ENCODE measurements at regions of chr1 and their contacts with region 1.

Region 1: GRCh38 chr1:170657275-170657853 is 6.6 kb upstream of the PRRX1 start:
- DNase-seq: peak; percentile 42
- ATAC-seq: peak; percentile 78
- H3K4me3 ChIP-seq: no peak overlapping the region
- H3K27ac ChIP-seq: no peak overlapping the region
- H3K4me1 ChIP-seq: no peaks in the 10 kb centered on the region
- H3K27me3 ChIP-seq: peaks cover 2 to 16% of the 10 kb centered on the region in 2 experiments
- CTCF ChIP-seq: no peak
- EP300 ChIP-seq: 0 out of 4 replicates have a peak, but pooled peaks of 1 of the 2 experiments have one; percentile 34
- POLR2A ChIP-seq: no peak
- RAD21 ChIP-seq: no peak

Region 2: GRCh38 chr1:170214117-170215032 is 443.0 kb before region 1 on chr1:
- CTCF ChIA-PET with region 1: no interaction called
- POLR2A ChIA-PET with region 1: no interaction called
- RAD21 ChIA-PET with region 1: no interaction called
- SMC1A ChIA-PET with region 1: no interaction called
- in situ Hi-C with region 1: no loop called
- intact Hi-C with region 1: no loop called
- DNase-seq: peak; percentile 32
- ATAC-seq: peak; percentile 94
- H3K4me3 ChIP-seq: no peak overlapping the region; the same call in 1 of the 2 replicates
- H3K27ac ChIP-seq: no peak overlapping the region; the same call in 1 of the 2 replicates
- H3K4me1 ChIP-seq: peaks cover 11% of the 10 kb centered on the region; the same call in 1 of the 2 replicates
- H3K27me3 ChIP-seq: no peaks in the 10 kb centered on the region
- CTCF ChIP-seq: no peak
- EP300 ChIP-seq: peak in 1 of 2 experiments; percentile 22; a peak in 1 of 4 replicates
- POLR2A ChIP-seq: no peak
- RAD21 ChIP-seq: no peak

Region 3: GRCh38 chr1:170520601-170521000 is 136.8 kb before region 1 on chr1:
- CTCF ChIA-PET with region 1: no interaction called
- POLR2A ChIA-PET with region 1: interaction called, 6 read pairs
- RAD21 ChIA-PET with region 1: interaction called, 4 read pairs
- SMC1A ChIA-PET with region 1: interaction called, 10 read pairs
- in situ Hi-C with region 1: no loop called
- intact Hi-C with region 1: no loop called
- DNase-seq: no peak
- ATAC-seq: no peak
- H3K4me3 ChIP-seq: no peak overlapping the region
- H3K27ac ChIP-seq: no peak overlapping the region
- H3K4me1 ChIP-seq: no peaks in the 10 kb centered on the region
- H3K27me3 ChIP-seq: no peaks in the 10 kb centered on the region; a peak in 1 of 4 replicates
- CTCF ChIP-seq: no peak
- EP300 ChIP-seq: no peak
- POLR2A ChIP-seq: no peak
- RAD21 ChIP-seq: no peak

Region 4: DNA sequence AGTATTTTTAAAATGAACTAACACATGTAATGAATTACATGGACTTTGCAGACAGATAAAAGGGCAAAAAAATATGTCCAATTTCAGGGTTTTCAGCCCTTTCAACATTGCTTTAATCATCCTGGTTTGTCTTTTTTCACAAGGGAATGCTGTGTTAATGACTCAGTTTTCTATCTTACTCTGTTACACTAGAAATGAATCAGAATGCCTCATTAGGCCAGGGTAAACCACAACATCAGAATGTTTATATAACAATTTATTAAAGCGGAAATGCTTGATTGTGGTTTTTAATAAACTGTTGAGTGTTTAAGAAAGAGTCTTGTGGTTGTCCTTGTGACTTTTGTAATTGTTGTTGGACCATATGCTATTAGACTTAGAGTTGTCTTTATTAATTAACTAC is 111.9 kb before region 1 on chr1:
- CTCF ChIA-PET with region 1: interaction called, 10 read pairs
- POLR2A ChIA-PET with region 1: interaction called, 50 read pairs
- RAD21 ChIA-PET with region 1: interaction called, 33 read pairs
- SMC1A ChIA-PET with region 1: interaction called, 112 read pairs
- in situ Hi-C with region 1: no loop called
- intact Hi-C with region 1: no loop called
- DNase-seq: no peak
- ATAC-seq: peak; percentile 54
- H3K4me3 ChIP-seq: no peak overlapping the region
- H3K27ac ChIP-seq: no peak overlapping the region
- H3K4me1 ChIP-seq: no peaks in the 10 kb centered on the region
- H3K27me3 ChIP-seq: no peaks in the 10 kb centered on the region
- CTCF ChIP-seq: no peak
- EP300 ChIP-seq: peak; percentile 11 to 91; a peak in 2 of 4 replicates
- POLR2A ChIP-seq: no peak
- RAD21 ChIP-seq: no peak

Region 5: DNA sequence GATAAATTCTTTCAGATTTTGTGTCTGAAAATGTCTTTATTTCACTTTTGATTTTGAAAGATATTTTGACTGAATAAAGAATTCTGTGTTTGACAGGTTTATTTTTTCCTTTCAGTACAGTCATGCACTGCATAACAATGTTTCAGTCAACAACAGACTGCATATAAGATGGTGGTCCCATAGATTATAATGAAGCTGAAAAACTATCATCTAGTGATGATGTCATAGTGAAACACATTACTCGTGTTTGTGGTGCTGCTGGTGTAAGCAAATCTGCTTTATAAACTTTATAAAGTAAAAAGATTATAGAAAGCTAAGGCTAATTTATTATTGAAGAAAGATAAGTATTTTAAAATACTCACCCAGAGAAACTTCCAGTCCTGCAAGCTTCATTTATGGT is 58.7 kb before region 1 on chr1:
- CTCF ChIA-PET with region 1: interaction called, 5 read pairs
- POLR2A ChIA-PET with region 1: interaction called, 12 read pairs
- RAD21 ChIA-PET with region 1: interaction called, 46 read pairs
- SMC1A ChIA-PET with region 1: interaction called, 35 read pairs
- in situ Hi-C with region 1: no loop called
- intact Hi-C with region 1: loop called (anchors 10 kb)
- DNase-seq: no peak
- ATAC-seq: peak; percentile 64
- H3K4me3 ChIP-seq: no peak overlapping the region
- H3K27ac ChIP-seq: no peak overlapping the region
- H3K4me1 ChIP-seq: no peaks in the 10 kb centered on the region
- H3K27me3 ChIP-seq: no peaks in the 10 kb centered on the region
- CTCF ChIP-seq: no peak
- EP300 ChIP-seq: no peak
- POLR2A ChIP-seq: no peak
- RAD21 ChIP-seq: no peak

Region 6: GRCh38 chr1:170640581-170640980 is 16.8 kb before region 1 on chr1:
- CTCF ChIA-PET with region 1: interaction called, 12 read pairs
- POLR2A ChIA-PET with region 1: interaction called, 17 read pairs
- RAD21 ChIA-PET with region 1: interaction called, 19 read pairs
- SMC1A ChIA-PET with region 1: interaction called, 150 read pairs
- in situ Hi-C with region 1: no loop called
- intact Hi-C with region 1: no loop called
- DNase-seq: no peak
- ATAC-seq: peak; percentile 49; the same call in 2 of the 3 replicates
- H3K4me3 ChIP-seq: no peak overlapping the region
- H3K27ac ChIP-seq: no peak overlapping the region
- H3K4me1 ChIP-seq: no peaks in the 10 kb centered on the region
- H3K27me3 ChIP-seq: no peaks in the 10 kb centered on the region
- CTCF ChIP-seq: no peak
- EP300 ChIP-seq: no peak
- POLR2A ChIP-seq: no peak
- RAD21 ChIP-seq: no peak

Region 7: GRCh38 chr1:170698301-170699275 is 41.2 kb after region 1 on chr1:
- CTCF ChIA-PET with region 1: no interaction called
- POLR2A ChIA-PET with region 1: no interaction called
- RAD21 ChIA-PET with region 1: no interaction called
- SMC1A ChIA-PET with region 1: no interaction called
- in situ Hi-C with region 1: no loop called
- intact Hi-C with region 1: no loop called
- DNase-seq: no peak
- ATAC-seq: no peak
- H3K4me3 ChIP-seq: no peak overlapping the region
- H3K27ac ChIP-seq: no peak overlapping the region
- H3K4me1 ChIP-seq: no peaks in the 10 kb centered on the region
- H3K27me3 ChIP-seq: no peaks in the 10 kb centered on the region; a peak in 1 of 4 replicates
- CTCF ChIP-seq: no peak
- EP300 ChIP-seq: no peak
- POLR2A ChIP-seq: no peak
- RAD21 ChIP-seq: no peak

Region 8: GRCh38 chr1:170840371-170840770 is 183.0 kb after region 1 on chr1:
- CTCF ChIA-PET with region 1: no interaction called
- POLR2A ChIA-PET with region 1: no interaction called
- RAD21 ChIA-PET with region 1: no interaction called
- SMC1A ChIA-PET with region 1: no interaction called
- in situ Hi-C with region 1: no loop called
- intact Hi-C with region 1: no loop called
- DNase-seq: no peak
- ATAC-seq: no peak
- H3K4me3 ChIP-seq: no peak overlapping the region
- H3K27ac ChIP-seq: no peak overlapping the region
- H3K4me1 ChIP-seq: no peaks in the 10 kb centered on the region
- H3K27me3 ChIP-seq: no peaks in the 10 kb centered on the region
- CTCF ChIP-seq: no peak
- EP300 ChIP-seq: no peak
- POLR2A ChIP-seq: no peak
- RAD21 ChIP-seq: no peak

Region 9: GRCh38 chr1:170893655-170894297 is 236.4 kb after region 1 on chr1:
- CTCF ChIA-PET with region 1: no interaction called
- POLR2A ChIA-PET with region 1: no interaction called
- RAD21 ChIA-PET with region 1: no interaction called
- SMC1A ChIA-PET with region 1: no interaction called
- in situ Hi-C with region 1: no loop called
- intact Hi-C with region 1: no loop called
- DNase-seq: no peak
- ATAC-seq: no peak
- H3K4me3 ChIP-seq: no peak overlapping the region
- H3K27ac ChIP-seq: no peak overlapping the region
- H3K4me1 ChIP-seq: no peaks in the 10 kb centered on the region
- H3K27me3 ChIP-seq: peaks cover 0 to 2% of the 10 kb centered on the region in 2 experiments; a peak in 2 of 4 replicates
- CTCF ChIP-seq: no peak
- EP300 ChIP-seq: no peak
- POLR2A ChIP-seq: no peak
- RAD21 ChIP-seq: no peak